ENCODE measurements at regions of chr9 and their contacts with region 1.

Region 1: DNA sequence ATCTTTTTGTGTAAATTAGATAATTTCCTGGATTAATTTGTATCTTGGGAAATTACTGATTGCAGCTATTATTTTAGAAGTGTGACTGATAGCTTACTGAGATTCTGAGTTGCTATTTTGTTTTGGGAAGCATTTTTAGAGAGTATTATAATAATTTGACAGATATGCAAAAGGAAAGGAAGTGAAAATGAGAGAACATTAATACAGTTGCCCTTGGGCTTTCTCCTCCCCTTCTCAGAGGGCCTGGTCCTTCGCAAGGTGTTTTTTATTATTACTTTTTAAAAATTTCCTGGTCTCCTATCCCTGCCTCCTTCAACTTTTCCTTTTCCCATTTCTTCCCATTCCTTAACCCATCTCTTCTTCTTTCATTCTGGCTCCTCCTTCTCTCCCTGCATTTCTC is 32.6 kb downstream of the UBAP1 start:
- DNase-seq: no peak
- H3K4me3 ChIP-seq: no peak overlapping the region
- H3K27ac ChIP-seq: no peak overlapping the region
- H3K4me1 ChIP-seq: peaks cover 22% of the 10 kb centered on the region
- CTCF ChIP-seq: no peak

Region 2: DNA sequence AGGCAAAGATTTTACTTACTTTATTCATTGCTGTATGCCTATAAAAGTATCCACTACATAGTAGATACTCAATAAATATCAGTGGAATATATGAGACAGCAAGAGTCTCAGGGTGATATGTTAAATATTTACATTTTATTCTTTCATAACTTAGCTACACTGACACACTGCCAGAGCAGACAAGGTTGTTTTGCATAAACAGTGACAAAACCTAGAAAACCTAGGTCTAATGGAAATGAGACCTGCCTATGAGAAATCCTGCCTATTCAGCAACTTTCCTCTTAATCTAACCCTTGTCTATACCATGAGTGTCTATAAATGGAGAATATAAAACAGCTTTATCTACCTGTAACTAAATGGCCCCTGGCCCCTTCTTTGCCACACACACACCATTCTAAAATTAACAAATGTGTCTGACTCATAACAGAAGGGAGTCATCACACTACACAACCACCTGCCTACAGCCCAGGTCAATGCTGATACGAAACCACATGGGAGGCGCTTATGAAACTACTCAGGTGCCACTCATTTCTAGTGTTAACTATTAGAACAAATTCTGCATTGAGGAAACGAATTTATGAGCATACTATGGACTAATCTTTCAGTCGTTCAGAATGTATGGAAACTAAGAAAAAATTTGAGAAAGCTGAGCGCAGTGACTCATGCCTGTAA is 223.0 kb before region 1 on chr9:
- CTCF ChIA-PET with region 1: no interaction called
- POLR2A ChIA-PET with region 1: no interaction called
- intact Hi-C with region 1: no loop called
- DNase-seq: no peak
- H3K4me3 ChIP-seq: no peak overlapping the region
- H3K27ac ChIP-seq: no peak overlapping the region
- H3K4me1 ChIP-seq: no peaks in the 10 kb centered on the region
- CTCF ChIP-seq: no peak

Region 3: DNA sequence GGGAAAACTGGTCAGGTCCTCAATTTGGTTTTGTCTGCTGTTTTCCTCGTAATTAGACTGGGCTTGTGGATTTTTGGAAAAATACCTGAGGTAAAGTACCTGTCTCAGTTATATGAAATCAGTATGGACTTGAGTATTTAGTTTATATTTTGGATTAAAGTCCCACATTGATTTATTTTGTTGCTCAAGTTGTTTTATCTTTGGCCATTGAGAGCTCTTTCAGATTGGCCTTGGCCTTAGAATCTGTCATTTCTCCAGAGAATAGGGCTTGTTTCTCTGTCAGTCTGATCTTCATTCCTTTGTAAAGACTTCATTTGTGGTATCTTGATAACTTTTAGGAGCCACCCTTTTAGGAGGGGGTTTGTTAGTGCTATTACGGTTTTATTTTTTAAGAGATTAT is 11.3 kb before region 1 on chr9:
- CTCF ChIA-PET with region 1: interaction called, 5 read pairs
- POLR2A ChIA-PET with region 1: interaction called, 11 read pairs
- intact Hi-C with region 1: no loop called
- DNase-seq: no peak
- H3K4me3 ChIP-seq: no peak overlapping the region
- H3K27ac ChIP-seq: no peak overlapping the region
- H3K4me1 ChIP-seq: no peaks in the 10 kb centered on the region
- CTCF ChIP-seq: no peak